Breast epithelium (tissue), 4 donors: ENCODE measurements at regions of chr10 and their contacts with region 1.

Region 1: GRCh38 chr10:121510201-121510771 is 88.0 kb downstream of the FGFR2 start:
- DNase-seq: no peak
- H3K4me3 ChIP-seq: no peak overlapping the region
- H3K27ac ChIP-seq: no peak overlapping the region
- H3K4me1 ChIP-seq: no peaks in the 10 kb centered on the region
- H3K27me3 ChIP-seq: no peaks in the 10 kb centered on the region
- CTCF ChIP-seq: no peak
- POLR2A ChIP-seq: no peak

Region 2: DNA sequence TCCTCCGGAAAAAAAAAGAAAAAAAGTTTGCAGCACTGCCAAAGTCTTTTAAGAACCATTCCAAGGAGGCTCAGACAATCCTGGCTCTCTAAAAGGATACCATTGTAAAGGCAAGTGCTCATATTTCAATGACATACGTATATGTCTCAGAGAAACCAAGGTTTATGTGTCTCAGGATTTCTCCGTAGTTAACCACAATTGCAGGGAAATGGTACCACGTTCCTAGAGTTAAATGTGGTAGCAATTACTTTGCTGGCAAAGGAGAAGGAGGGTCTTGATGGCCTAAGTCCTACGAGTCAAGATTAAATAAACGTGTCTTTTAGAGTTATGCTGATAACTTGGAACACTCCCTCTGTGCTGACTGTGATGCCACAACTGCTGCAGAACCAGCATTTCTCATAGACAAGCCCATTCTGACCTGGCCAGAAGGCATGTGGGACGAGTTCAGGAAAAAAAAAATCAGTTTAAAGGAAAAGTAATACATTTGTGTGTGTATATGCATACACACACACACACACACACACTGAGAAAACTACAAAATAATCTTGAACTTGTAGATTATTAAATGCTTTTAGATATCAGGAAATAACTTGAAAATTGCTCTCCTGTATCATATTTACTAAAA is 157.9 kb before region 1 on chr10:
- intact Hi-C with region 1: loop called (anchors 5 kb)
- DNase-seq: no peak
- H3K4me3 ChIP-seq: no peak overlapping the region
- H3K27ac ChIP-seq: no peak overlapping the region
- H3K4me1 ChIP-seq: no peaks in the 10 kb centered on the region
- H3K27me3 ChIP-seq: no peaks in the 10 kb centered on the region
- CTCF ChIP-seq: no peak
- POLR2A ChIP-seq: no peak

Region 3: GRCh38 chr10:121497513-121498470 is 12.5 kb before region 1 on chr10:
- intact Hi-C with region 1: loop called (anchors 1 kb)
- DNase-seq: no peak
- H3K4me3 ChIP-seq: no peak overlapping the region
- H3K27ac ChIP-seq: no peak overlapping the region
- H3K4me1 ChIP-seq: no peaks in the 10 kb centered on the region
- H3K27me3 ChIP-seq: no peaks in the 10 kb centered on the region
- CTCF ChIP-seq: no peak
- POLR2A ChIP-seq: no peak

Region 4: DNA sequence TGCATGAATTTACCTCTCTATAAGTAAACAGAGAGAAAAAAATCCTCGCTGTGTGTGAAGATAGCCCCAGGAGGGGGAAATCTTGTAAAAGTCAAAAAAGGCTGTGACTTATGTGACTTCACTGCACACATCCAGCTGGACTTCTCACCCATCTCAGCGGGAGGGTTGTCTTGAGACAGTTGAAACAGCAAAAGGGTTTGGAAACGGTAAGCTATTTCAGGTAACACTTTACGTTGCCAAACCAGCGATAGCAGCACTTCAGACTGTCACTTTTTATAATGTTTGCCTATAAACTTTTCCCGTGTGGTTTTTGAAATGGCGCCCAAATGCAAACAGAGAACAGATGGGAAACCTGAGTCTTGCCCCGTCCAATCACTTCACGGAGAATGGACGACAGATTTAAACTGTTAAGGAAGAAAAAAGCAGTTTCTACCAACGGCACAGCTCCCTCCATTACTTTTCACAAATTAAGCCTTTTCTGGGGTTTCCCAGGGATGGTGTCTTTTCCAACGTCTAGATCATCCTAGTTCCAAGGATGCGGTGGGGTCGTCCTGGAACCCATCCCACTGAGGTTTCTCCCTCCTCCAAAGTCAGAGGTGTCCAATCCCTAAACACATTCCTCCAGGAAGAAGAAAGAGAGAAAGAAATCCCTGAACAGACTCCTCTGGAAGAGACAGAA is 62.7 kb after region 1 on chr10:
- intact Hi-C with region 1: no loop called
- DNase-seq: no peak
- H3K4me3 ChIP-seq: peak overlapping the region in 2 of 3 donors; percentile 2 to 39
- H3K27ac ChIP-seq: peak overlapping the region; percentile 69 to 75
- H3K4me1 ChIP-seq: peaks cover 0 to 5% of the 10 kb centered on the region in 2 donors
- H3K27me3 ChIP-seq: no peaks in the 10 kb centered on the region
- CTCF ChIP-seq: no peak
- POLR2A ChIP-seq: no peak

Region 5: DNA sequence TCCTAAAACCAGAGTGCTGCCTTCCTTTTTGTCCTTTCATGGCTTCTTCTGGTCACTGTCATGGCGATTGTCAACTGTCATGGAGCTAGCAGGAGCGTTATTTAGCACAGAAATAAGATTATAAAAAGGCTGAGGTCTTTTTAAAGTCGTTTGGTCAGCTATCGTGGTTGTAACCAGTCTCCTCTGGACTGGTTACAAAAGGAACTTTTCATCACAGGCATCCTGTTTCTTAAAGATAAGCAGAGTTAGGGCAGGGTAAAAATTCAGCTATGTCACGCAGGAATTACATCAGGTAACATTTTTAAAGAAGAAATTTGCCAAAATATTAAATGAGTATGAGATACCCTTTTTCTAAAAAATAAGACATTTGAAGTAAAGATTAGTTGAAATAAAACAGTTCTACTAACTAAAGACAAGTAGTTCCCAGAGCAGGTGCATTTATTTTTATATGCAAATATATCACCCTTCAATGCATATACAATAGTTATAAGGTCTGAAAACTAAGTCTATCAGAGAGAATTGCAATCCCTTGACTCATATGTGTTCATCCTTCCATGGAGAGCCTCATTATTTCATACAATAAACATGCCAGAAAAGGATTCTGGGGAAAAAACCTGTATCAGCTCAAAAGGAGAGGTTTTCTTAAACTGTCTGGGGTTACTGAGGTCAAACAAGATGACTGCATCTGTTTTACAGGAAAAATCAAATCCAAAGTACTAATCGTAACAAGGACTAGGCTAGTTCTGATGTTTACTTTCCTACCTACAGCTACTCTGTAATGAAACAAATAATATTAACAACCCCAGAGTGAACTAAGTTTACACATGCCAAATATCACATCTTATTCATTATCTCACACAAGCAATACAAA is 1421.0 kb after region 1 on chr10:
- intact Hi-C with region 1: no loop called
- DNase-seq: no peak
- H3K4me3 ChIP-seq: no peak overlapping the region
- H3K27ac ChIP-seq: no peak overlapping the region
- H3K4me1 ChIP-seq: no peaks in the 10 kb centered on the region
- H3K27me3 ChIP-seq: no peaks in the 10 kb centered on the region
- CTCF ChIP-seq: no peak
- POLR2A ChIP-seq: no peak